ENCODE measurements at regions of chr1 and their contacts with region 1.

Region 1: GRCh38 chr1:206112600-206113319 is 4.4 kb downstream of the AVPR1B start:
- DNase-seq: no peak
- ATAC-seq: no peak
- H3K4me3 ChIP-seq: no peak overlapping the region
- H3K4me3 Mint-ChIP-seq: no peak overlapping the region
- H3K27ac ChIP-seq: no peak overlapping the region
- H3K27ac Mint-ChIP-seq: no peak overlapping the region
- H3K4me1 ChIP-seq: peaks cover 2% of the 10 kb centered on the region
- H3K4me1 Mint-ChIP-seq: peaks cover 5% of the 10 kb centered on the region
- H3K27me3 ChIP-seq: peaks cover 2 to 6% of the 10 kb centered on the region in 2 experiments
- H3K27me3 Mint-ChIP-seq: peaks cover 16% of the 10 kb centered on the region
- CTCF ChIP-seq: no peak

Region 2: DNA sequence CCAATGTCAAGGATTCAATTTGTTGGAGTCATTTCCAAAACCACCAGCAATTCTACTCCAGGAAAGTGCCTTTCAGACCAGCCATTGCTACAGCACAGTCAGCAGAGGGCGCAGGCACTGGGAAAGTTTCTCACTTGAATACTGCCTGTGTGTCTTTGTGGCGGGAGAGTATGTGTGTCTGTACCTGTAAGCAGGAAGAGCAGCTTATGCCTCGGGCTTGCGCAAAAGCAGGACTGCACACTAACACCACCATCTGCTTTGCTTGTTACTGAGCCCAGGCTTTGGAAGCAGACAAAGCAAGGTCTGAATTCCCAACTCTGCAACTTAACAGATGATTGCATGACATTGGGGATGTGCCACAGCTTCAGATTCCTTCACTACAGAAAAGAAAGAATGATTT is 82.0 kb before region 1 on chr1:
- CTCF ChIA-PET with region 1: interaction called, 103 read pairs
- POLR2A ChIA-PET with region 1: no interaction called
- intact Hi-C with region 1: no loop called
- DNase-seq: peak in 8 of 9 experiments; percentile 42 to 75 (median 58)
- ATAC-seq: peak; percentile 57
- H3K4me3 ChIP-seq: no peak overlapping the region
- H3K4me3 Mint-ChIP-seq: no peak overlapping the region
- H3K27ac ChIP-seq: no peak overlapping the region
- H3K27ac Mint-ChIP-seq: no peak overlapping the region
- H3K4me1 ChIP-seq: no peaks in the 10 kb centered on the region
- H3K4me1 Mint-ChIP-seq: peaks cover 9% of the 10 kb centered on the region
- H3K27me3 ChIP-seq: no peaks in the 10 kb centered on the region
- H3K27me3 Mint-ChIP-seq: peaks cover 13% of the 10 kb centered on the region
- CTCF ChIP-seq: peak; percentile 63

Region 3: DNA sequence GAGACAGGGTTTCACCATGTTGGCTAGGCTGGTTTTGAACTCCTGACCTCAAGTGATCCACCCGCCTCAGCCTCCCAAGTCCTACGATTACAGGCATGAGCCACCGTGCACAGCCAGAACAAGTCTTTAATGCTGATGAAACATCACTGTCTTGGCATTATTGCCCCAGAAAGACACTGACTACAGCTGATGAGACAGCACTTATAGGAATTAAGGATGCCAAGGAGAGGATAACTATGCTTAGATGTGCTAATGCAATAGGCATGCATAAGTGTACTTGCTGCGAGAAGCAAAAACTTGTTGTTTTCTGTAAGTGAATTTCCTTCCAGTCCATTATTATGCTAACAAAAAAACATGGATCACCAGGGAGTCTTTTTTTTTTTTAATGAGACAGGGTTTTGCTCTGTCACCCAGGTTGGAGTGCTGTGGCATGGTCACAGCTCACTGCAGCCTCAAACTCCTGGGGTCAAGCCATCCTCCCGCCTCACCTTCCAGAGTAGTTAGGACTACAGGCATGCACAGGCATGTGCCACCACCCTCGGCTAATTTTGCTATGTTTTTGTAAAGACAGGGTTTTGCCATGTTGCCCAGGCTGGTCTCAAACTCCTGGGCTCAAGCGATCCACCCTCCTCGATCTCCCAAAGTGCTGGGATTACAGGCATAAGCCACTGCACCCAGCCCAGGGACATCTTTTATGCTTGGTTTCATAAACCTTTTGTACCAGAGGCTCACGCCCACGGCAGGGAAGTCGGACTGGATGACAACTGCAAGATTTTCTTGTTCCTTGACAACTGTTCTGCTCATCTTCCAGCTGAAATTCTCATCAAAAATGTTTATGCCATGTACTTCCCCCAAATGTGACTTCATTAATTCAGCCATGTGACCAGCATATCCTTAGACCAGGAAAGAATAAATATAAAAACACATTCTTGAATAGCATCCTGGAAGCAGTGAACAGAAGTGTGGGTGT is 36.7 kb before region 1 on chr1:
- CTCF ChIA-PET with region 1: no interaction called
- POLR2A ChIA-PET with region 1: no interaction called
- intact Hi-C with region 1: no loop called
- DNase-seq: no peak
- ATAC-seq: no peak
- H3K4me3 ChIP-seq: no peak overlapping the region
- H3K4me3 Mint-ChIP-seq: no peak overlapping the region
- H3K27ac ChIP-seq: no peak overlapping the region
- H3K27ac Mint-ChIP-seq: no peak overlapping the region
- H3K4me1 ChIP-seq: peaks cover 11% of the 10 kb centered on the region
- H3K4me1 Mint-ChIP-seq: peaks cover 15% of the 10 kb centered on the region
- H3K27me3 ChIP-seq: no peaks in the 10 kb centered on the region
- H3K27me3 Mint-ChIP-seq: peaks cover 9% of the 10 kb centered on the region
- CTCF ChIP-seq: no peak

Region 4: DNA sequence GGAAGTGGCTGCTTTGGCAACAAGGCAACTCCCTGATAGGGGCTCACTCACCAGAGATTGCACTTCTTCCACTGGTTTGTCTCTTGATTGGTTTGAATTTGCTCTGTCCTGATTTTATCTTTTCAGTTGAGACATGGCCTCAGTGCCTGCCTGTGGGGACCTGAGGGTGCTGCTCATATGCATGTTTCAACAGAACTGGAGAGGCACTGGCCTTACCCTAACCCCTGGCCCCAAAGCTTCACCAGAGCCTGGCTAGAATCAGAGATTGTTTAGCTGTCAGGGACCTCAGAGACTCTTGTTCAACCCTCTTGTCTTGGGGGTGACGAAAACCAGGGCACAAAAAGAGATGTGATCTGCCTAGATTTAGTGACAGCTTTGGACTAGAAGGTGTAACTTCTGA is 12.4 kb before region 1 on chr1:
- CTCF ChIA-PET with region 1: no interaction called
- POLR2A ChIA-PET with region 1: no interaction called
- intact Hi-C with region 1: no loop called
- DNase-seq: no peak
- ATAC-seq: no peak
- H3K4me3 ChIP-seq: no peak overlapping the region
- H3K4me3 Mint-ChIP-seq: no peak overlapping the region
- H3K27ac ChIP-seq: no peak overlapping the region
- H3K27ac Mint-ChIP-seq: no peak overlapping the region
- H3K4me1 ChIP-seq: no peaks in the 10 kb centered on the region
- H3K4me1 Mint-ChIP-seq: no peaks in the 10 kb centered on the region
- H3K27me3 ChIP-seq: peaks cover 0 to 6% of the 10 kb centered on the region in 2 experiments
- H3K27me3 Mint-ChIP-seq: peaks cover 21% of the 10 kb centered on the region
- CTCF ChIP-seq: no peak

Region 5: GRCh38 chr1:207612762-207613161 is 1500.0 kb after region 1 on chr1:
- CTCF ChIA-PET with region 1: no interaction called
- POLR2A ChIA-PET with region 1: no interaction called
- intact Hi-C with region 1: no loop called
- DNase-seq: no peak
- ATAC-seq: no peak
- H3K4me3 ChIP-seq: no peak overlapping the region
- H3K4me3 Mint-ChIP-seq: no peak overlapping the region
- H3K27ac ChIP-seq: no peak overlapping the region
- H3K27ac Mint-ChIP-seq: no peak overlapping the region
- H3K4me1 ChIP-seq: no peaks in the 10 kb centered on the region
- H3K4me1 Mint-ChIP-seq: no peaks in the 10 kb centered on the region
- H3K27me3 ChIP-seq: no peaks in the 10 kb centered on the region
- H3K27me3 Mint-ChIP-seq: no peaks in the 10 kb centered on the region
- CTCF ChIP-seq: no peak